ENCODE measurements at regions of chr7 and their contacts with region 1.

Region 1: GRCh38 chr7:138002096-138002827 is 376 bp upstream of the CREB3L2 start:
- DNase-seq: peak; percentile 98
- H3K4me3 Mint-ChIP-seq: peak overlapping the region; percentile 91
- H3K27ac Mint-ChIP-seq: peak overlapping the region; percentile 76
- H3K4me1 Mint-ChIP-seq: peaks cover 25% of the 10 kb centered on the region
- H3K27me3 Mint-ChIP-seq: no peaks in the 10 kb centered on the region

Region 2: GRCh38 chr7:137196648-137197047 is 805.6 kb before region 1 on chr7:
- CTCF ChIA-PET with region 1: no interaction called
- intact Hi-C with region 1: no loop called
- DNase-seq: no peak
- H3K4me3 Mint-ChIP-seq: no peak overlapping the region
- H3K27ac Mint-ChIP-seq: no peak overlapping the region
- H3K4me1 Mint-ChIP-seq: no peaks in the 10 kb centered on the region
- H3K27me3 Mint-ChIP-seq: no peaks in the 10 kb centered on the region

Region 3: GRCh38 chr7:137538361-137538762 is 463.9 kb before region 1 on chr7:
- CTCF ChIA-PET with region 1: no interaction called
- intact Hi-C with region 1: no loop called
- DNase-seq: no peak
- H3K4me3 Mint-ChIP-seq: no peak overlapping the region
- H3K27ac Mint-ChIP-seq: no peak overlapping the region
- H3K4me1 Mint-ChIP-seq: no peaks in the 10 kb centered on the region
- H3K27me3 Mint-ChIP-seq: peaks cover 6% of the 10 kb centered on the region

Region 4: DNA sequence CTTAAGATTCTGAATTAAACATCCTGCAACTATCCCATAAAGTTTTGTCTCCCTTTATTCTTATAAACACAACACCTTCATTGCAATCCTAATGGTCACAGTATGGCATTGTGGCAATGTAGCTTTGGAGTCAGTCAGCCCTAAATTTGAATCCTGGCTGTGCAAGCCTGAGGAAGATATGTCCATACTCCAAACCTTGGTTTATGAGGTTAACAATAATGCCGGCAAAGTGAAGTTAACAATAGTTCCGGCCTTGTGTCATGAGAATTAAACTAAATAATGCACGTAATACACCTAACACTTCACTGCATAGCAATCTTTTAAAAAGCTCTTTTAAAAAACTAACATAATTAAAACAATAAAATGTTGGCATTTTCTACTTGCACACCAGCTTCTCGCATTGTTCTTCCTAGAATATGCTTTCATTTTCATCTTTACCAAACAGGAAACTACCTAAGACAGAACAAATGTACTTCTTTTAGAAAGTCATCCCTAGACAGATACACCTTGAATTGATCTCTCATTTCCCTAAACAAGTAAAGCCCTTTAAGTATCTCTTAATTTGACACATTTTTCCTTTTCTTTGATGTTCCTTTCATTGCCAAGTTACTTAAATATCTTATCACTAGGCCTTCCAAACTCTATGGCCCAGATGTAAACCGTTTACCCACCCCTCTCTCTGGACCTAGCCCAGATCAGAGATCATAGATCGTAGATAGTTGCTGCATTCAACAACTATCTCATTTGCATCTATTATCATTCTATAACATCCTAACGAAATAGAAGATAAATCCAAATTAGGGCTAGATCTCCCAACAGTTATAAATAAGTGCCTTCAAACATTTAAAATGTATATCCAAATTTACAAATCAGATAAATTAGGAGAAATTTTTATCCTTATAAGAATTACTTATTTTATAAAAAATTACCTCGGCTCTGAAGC is 67.0 kb before region 1 on chr7:
- CTCF ChIA-PET with region 1: interaction called, 6 read pairs
- intact Hi-C with region 1: loop called (anchors 1 kb)
- DNase-seq: no peak
- H3K4me3 Mint-ChIP-seq: peak overlapping the region; percentile 54
- H3K27ac Mint-ChIP-seq: peak overlapping the region; percentile 76
- H3K4me1 Mint-ChIP-seq: peaks cover 44% of the 10 kb centered on the region
- H3K27me3 Mint-ChIP-seq: no peaks in the 10 kb centered on the region

Region 5: GRCh38 chr7:137961200-137962177 is 40.8 kb before region 1 on chr7:
- CTCF ChIA-PET with region 1: interaction called, 4 read pairs
- intact Hi-C with region 1: loop called (anchors 2 kb)
- DNase-seq: peak; percentile 65
- H3K4me3 Mint-ChIP-seq: no peak overlapping the region
- H3K27ac Mint-ChIP-seq: no peak overlapping the region
- H3K4me1 Mint-ChIP-seq: peaks cover 22% of the 10 kb centered on the region
- H3K27me3 Mint-ChIP-seq: no peaks in the 10 kb centered on the region

Region 6: DNA sequence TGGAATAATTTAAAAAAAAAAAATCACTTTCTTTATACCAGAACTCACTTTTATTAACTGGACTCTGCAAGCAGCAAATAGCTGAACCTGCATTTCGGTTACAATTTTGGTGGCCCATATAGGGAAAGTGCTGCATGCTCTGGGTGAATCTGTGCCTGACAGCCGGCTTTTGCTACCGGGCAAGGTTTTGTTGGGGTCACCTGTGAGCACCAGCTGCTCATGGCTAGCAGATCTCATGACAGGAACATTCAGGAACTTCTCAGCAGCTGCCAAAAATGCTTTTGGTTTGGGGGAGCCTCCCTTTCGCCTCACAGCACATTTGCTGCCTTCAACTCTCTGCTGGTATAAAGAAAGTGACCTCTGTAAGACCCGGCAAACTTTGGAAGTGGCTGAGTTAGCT is 12.8 kb after region 1 on chr7:
- CTCF ChIA-PET with region 1: interaction called, 13 read pairs
- intact Hi-C with region 1: no loop called
- DNase-seq: no peak
- H3K4me3 Mint-ChIP-seq: no peak overlapping the region
- H3K27ac Mint-ChIP-seq: no peak overlapping the region
- H3K4me1 Mint-ChIP-seq: no peaks in the 10 kb centered on the region
- H3K27me3 Mint-ChIP-seq: no peaks in the 10 kb centered on the region

Region 7: GRCh38 chr7:138865843-138866242 is 863.6 kb after region 1 on chr7:
- CTCF ChIA-PET with region 1: no interaction called
- intact Hi-C with region 1: loop called (anchors 5 kb)
- DNase-seq: peak; percentile 67
- H3K4me3 Mint-ChIP-seq: no peak overlapping the region
- H3K27ac Mint-ChIP-seq: no peak overlapping the region
- H3K4me1 Mint-ChIP-seq: peaks cover 19% of the 10 kb centered on the region
- H3K27me3 Mint-ChIP-seq: no peaks in the 10 kb centered on the region